Cardiac septum (tissue), 1 donor: ENCODE measurements at regions of chr22 and their contacts with region 1.

Region 1: DNA sequence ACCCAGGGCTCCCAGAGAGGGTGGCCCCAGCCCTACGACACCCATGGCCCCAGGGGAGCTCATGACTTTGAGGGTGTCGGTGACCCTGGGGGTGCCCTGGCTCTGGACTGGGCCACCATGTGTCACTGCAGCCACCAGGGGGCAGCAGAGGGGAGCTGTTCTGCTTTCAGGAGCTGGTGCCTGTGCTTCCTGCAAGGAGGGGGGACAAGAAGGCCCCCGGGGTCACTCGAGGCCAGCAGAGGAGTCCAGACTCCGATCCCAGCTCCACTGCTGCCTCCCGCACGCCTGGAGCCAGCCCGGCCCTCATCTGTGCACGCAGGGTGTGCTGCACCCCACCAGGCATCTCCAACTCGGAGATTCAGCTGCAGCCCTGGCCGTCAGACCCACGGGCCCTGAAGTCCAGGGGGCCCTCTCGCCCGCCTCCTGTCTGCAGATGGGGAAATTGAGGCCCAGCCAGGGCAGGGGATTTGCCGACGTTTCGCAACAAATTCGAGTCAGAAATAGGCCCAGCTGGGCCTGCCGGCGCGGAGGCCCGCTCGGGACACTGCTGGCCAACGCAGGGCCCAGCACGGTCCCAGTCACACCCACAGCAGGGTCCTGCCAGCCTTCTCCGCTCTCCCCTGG is 29.5 kb upstream of the WNT7B start:
- DNase-seq: peak; percentile 96

Region 2: GRCh38 chr22:46116491-46116958 is 110.0 kb after region 1 on chr22:
- intact Hi-C with region 1: loop called (anchors 2 kb)
- DNase-seq: peak; percentile 96

Region 3: DNA sequence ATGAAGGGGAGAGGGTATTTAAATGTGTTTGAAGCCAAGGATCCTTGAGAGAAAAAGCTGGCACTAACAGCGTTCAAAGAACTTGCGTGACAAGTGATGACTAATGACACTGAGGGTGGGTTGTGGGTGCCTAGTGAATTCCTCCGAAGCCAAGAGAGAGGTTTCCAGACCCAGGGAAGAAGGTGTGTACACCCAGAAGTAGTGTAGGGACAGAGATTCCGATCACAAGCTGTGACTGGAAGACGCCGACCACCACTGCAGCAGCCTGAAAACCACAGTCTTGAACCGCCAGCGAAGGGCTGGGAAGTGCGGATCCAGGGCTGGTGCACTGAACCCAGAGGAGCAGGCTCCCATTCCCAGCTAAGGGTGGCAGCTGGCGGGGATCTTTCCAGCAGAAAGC is 153.3 kb after region 1 on chr22:
- intact Hi-C with region 1: no loop called
- DNase-seq: no peak